Activated T-helper 1 cell treated with anti-CD3 and anti-CD28 coated beads, Interleukin-12 subunit alpha, Interleukin-12 subunit beta, Interleukin-2, Interleukin-4 antibody, amounts not matched to agents 30 ng/mL and 10 ng/mL and 1 ng/mL, durations not matched to agents 14 hours and 24 hours and 36 hours (primary cell): ENCODE measurements at regions of chr6 and their contacts with region 1.

Region 1: DNA sequence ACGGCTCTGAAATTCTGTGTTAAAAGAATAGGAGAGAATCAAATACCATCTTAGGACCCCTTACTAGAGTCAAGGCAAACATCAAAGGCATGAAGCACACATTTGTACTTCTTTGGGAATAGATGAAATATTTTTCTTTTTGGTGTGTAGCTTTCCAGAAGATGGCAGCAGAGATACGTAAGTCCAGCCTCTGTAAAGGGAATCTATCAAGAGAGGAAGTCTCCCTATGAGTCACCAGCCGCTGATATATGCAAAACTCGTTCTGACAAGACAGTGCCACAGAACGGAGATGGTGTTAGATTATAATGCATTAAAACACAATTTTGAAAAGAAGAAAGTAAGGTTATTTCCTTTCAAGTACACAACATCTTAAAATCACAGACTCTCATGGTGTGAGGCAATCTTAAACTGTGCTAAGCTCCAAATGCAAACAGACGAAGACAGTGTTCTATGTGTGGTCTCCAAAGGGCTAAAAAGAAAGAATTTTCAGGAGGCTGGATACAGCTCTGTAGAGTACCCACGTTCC is 120.0 kb upstream of the AGPAT4 start:
- DNase-seq: peak; percentile 57
- H3K4me3 Mint-ChIP-seq: no peak overlapping the region
- H3K27ac Mint-ChIP-seq: no peak overlapping the region
- H3K4me1 Mint-ChIP-seq: no peaks in the 10 kb centered on the region
- H3K27me3 Mint-ChIP-seq: peaks cover 29% of the 10 kb centered on the region

Region 2: GRCh38 chr6:161418463-161418945 is 24.6 kb after region 1 on chr6:
- intact Hi-C with region 1: loop called (anchors 2 kb)
- DNase-seq: no peak
- H3K4me3 Mint-ChIP-seq: no peak overlapping the region
- H3K27ac Mint-ChIP-seq: no peak overlapping the region
- H3K4me1 Mint-ChIP-seq: no peaks in the 10 kb centered on the region
- H3K27me3 Mint-ChIP-seq: peaks cover 5% of the 10 kb centered on the region

Region 3: GRCh38 chr6:161694995-161695394 is 301.1 kb after region 1 on chr6:
- intact Hi-C with region 1: loop called (anchors 1 kb)
- DNase-seq: no peak
- H3K4me3 Mint-ChIP-seq: no peak overlapping the region
- H3K27ac Mint-ChIP-seq: no peak overlapping the region
- H3K4me1 Mint-ChIP-seq: no peaks in the 10 kb centered on the region
- H3K27me3 Mint-ChIP-seq: peaks cover 3% of the 10 kb centered on the region

Region 4: DNA sequence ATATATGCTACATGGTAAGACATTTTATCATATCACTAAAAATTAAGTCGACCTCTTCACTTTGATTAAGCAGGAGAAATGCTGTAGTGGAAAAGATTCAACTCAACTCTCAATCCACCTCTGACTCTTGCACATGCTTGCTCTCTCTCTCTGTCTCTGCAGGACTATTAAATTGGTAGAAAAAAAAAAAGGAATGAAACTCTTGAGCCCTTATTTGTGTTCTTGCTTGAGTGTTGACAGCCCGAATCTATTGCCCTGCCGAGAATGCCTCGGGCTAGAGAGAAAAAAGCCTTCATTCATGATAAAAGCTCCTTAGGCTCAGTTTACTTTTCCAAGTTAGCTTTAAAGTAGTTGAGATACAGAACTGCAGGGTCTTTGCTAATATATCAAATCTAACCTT is 611.5 kb after region 1 on chr6:
- intact Hi-C with region 1: loop called (anchors 5 kb)
- DNase-seq: no peak
- H3K4me3 Mint-ChIP-seq: no peak overlapping the region
- H3K27ac Mint-ChIP-seq: no peak overlapping the region
- H3K4me1 Mint-ChIP-seq: no peaks in the 10 kb centered on the region
- H3K27me3 Mint-ChIP-seq: no peaks in the 10 kb centered on the region

Region 5: DNA sequence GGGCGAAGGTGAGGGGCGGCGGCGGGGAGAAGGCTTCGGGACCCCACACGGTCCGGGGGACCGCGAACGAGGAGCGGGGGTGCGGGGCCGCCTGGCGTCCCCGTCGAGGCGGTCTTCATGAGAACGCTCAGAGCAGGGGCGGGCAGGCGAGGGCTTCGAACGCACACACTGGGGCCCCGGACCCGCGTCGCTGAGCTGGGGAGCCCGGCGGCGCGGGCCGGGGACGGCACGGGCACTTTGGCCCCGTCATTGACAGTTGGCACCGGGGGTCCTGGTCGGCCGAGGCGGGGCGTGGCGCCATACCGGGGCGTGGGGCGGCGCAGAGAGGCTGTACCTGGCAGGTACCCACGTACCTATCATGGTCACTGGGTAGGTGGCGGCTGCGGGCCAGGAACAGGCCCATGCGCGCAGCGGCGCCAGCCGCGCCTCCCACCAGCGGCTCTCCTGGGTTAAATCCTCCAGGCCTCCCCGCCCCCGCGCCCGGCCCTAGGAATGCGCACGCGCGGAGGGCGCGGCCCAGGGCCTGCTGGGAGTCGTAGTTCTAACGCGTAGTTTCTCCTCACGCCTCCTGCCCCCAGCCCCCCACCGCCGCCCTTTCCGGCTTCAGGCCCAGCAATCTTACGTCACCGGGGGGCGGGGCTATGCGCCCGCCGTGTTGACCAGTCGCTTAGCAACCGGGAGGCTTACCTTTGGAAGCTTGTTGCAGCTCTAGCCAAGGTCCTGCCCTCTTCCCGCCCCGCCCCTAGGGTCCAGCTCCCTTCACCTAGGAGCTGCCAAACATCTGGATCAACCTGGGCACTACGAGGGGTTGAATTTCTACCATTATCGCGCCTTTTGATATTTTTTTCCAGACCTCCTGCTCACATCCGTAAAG is 1333.6 kb after region 1 on chr6 and contains the starts of genes PACRG and PRKN:
- intact Hi-C with region 1: loop called (anchors 1 kb)
- DNase-seq: peak; percentile 95
- H3K4me3 Mint-ChIP-seq: peak within 1 kb of the TSS; percentile 89
- H3K27ac Mint-ChIP-seq: peak within 1 kb of the TSS; percentile 86
- H3K4me1 Mint-ChIP-seq: peaks cover 11% of the 10 kb centered on the region
- H3K27me3 Mint-ChIP-seq: peaks cover 7% of the 10 kb centered on the region
- total RNA-seq, gene PACRG: 0.36 TPM in 1 of 2 replicates, not detected in the other
- total RNA-seq, gene PRKN: not detected in 2 replicates